Activated T-helper 2 cell treated with anti-CD3 and anti-CD28 coated beads, Interferon-gamma antibody, Interleukin-2, Interleukin-4, amounts not matched to agents 10 μg/mL and 5 μg/mL and 100 μg/mL, durations not matched to agents 14 hours and 24 hours and 36 hours (primary cell): ENCODE measurements at regions of chr1 and their contacts with region 1.

Region 1: DNA sequence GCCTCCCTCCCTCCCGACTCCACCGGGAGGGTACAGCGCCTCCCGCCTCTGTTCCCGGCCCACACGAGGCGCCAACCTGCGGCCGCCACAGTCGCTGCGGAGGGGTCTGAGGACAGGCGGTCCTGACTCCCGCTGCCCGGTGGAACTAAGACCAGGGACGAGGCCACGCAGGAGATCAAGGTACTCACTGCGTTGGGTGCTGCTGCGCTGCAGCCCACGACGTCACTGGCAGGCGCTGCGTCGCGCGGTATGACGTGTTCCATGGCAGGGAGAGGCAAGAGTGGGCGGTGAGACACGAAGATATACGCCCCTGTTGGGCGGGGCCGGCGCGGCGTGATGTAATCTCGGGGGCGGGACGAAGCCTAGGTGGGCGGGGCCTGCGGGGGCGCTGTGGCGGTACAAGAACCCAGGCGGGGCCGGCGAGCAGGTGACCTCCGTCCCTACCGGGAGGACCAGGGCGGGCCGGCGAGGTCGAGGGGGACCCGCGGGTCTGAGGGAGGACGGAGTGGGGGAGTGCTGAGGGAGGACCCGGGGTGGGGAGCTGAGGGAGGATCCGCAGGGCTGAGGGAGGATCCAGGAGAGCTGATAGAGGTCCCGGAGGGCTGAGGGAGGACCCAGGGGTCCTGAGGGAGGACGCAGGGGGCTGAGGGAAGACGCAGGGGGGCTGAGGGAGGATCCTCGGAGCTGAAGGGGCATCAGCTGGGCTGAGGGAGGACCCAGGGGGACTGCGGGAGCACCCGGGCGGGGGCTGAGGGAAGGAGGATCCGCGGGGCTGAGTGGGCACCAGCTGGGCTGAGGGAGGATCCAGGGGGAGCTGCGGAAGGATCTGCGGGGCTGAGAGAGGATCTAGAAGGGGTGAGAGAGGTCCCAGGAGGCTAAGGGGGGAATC is at the start of gene MRPL55:
- DNase-seq: peak; percentile 98
- H3K4me3 Mint-ChIP-seq: peak within 1 kb of the TSS; percentile 82
- H3K27ac Mint-ChIP-seq: peak within 1 kb of the TSS; percentile 87
- H3K4me1 Mint-ChIP-seq: peaks cover 21% of the 10 kb centered on the region
- H3K27me3 Mint-ChIP-seq: no peaks in the 10 kb centered on the region
- total RNA-seq, gene MRPL55: 47.3 and 53.6 TPM in 2 replicates

Region 2: GRCh38 chr1:227734856-227735538 is 374.3 kb before region 1 on chr1 and contains the starts of genes JMJD4 and SNAP47:
- intact Hi-C with region 1: loop called (anchors 10 kb)
- DNase-seq: peak; percentile 92
- H3K4me3 Mint-ChIP-seq: peak within 1 kb of the TSS; percentile 96
- H3K27ac Mint-ChIP-seq: peak within 1 kb of the TSS; percentile 93
- H3K4me1 Mint-ChIP-seq: peaks cover 23% of the 10 kb centered on the region
- H3K27me3 Mint-ChIP-seq: no peaks in the 10 kb centered on the region
- total RNA-seq, gene JMJD4: 26.6 and 27.5 TPM in 2 replicates
- total RNA-seq, gene SNAP47: 28.4 and 29.3 TPM in 2 replicates

Region 3: GRCh38 chr1:228082135-228082891 is 27.0 kb before region 1 on chr1 and contains the start of gene ARF1:
- intact Hi-C with region 1: loop called (anchors 1 kb)
- DNase-seq: peak; percentile 89
- H3K4me3 Mint-ChIP-seq: peak within 1 kb of the TSS; percentile 89
- H3K27ac Mint-ChIP-seq: peak within 1 kb of the TSS; percentile 92
- H3K4me1 Mint-ChIP-seq: peaks cover 42% of the 10 kb centered on the region
- H3K27me3 Mint-ChIP-seq: no peaks in the 10 kb centered on the region
- total RNA-seq, gene ARF1: 409 and 410 TPM in 2 replicates

Region 4: DNA sequence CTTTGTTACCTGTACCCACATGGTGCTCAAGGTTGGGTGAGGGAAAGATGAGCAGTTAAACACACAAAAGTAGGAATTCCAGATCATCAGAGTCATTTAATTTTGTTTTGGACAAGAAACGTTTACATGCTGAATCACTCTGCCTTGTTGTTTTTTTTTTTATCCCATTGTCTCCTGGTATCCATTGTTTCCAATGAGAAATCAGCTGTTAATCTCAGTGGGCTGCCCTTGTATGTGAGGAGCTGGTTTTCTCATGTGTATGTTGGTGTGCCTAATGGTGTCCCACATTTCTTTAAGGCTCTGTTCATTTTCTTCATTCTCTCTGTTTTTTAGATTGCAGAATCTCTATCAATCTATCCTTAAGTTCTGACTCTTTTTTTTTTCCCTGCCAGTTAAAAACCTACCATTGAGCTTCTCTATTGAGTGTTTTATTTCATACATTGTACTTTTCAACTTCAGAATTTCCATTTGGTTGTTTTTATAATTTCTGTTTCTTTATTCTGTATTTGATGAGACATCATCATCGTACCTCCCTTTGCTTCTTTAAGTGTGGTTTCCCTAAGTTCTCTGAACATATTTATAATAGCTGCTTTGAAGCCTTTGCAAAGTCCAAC is 89.8 kb after region 1 on chr1:
- intact Hi-C with region 1: no loop called
- DNase-seq: no peak
- H3K4me3 Mint-ChIP-seq: no peak overlapping the region
- H3K27ac Mint-ChIP-seq: no peak overlapping the region
- H3K4me1 Mint-ChIP-seq: no peaks in the 10 kb centered on the region
- H3K27me3 Mint-ChIP-seq: no peaks in the 10 kb centered on the region

Region 5: DNA sequence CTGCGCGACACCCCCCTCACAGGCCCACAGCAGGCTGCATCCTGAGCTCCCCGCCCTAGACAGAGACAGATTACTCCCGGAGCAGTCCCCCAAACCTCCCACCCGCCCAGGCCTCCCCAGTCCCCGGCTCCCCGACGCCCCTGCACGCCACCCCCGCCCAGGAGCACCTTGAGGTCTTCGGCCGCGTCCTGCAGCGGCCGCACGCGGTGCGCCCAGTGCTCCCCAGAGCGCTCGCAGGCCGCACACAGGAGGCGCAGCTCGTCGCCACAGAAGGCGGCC is 296.6 kb after region 1 on chr1:
- intact Hi-C with region 1: loop called (anchors 10 kb)
- DNase-seq: no peak
- H3K4me3 Mint-ChIP-seq: peak overlapping the region; percentile 97
- H3K27ac Mint-ChIP-seq: peak overlapping the region; percentile 92
- H3K4me1 Mint-ChIP-seq: peaks cover 41% of the 10 kb centered on the region
- H3K27me3 Mint-ChIP-seq: no peaks in the 10 kb centered on the region